Heart left ventricle (tissue), 16 donors: ENCODE measurements at regions of chr5 and their contacts with region 1.

Region 1: GRCh38 chr5:116507941-116508655 is 66.5 kb downstream of the SEMA6A start:
- DNase-seq: no peak
- ATAC-seq: no peak
- H3K4me3 ChIP-seq: no peak overlapping the region
- H3K27ac ChIP-seq: peak overlapping the region in 1 of 12 donors; percentile 45
- H3K4me1 ChIP-seq: peaks cover 0 to 21% (median 1%) of the 10 kb centered on the region in 12 donors
- H3K27me3 ChIP-seq: no peaks in the 10 kb centered on the region
- CTCF ChIP-seq: no peak
- POLR2A ChIP-seq: no peak

Region 2: GRCh38 chr5:116420540-116420939 is 87.6 kb before region 1 on chr5:
- intact Hi-C with region 1: no loop called
- DNase-seq: peak in 4 of 5 donors; percentile 32 to 47 (median 38)
- ATAC-seq: peak; percentile 47 to 95 (median 64)
- H3K4me3 ChIP-seq: no peak overlapping the region
- H3K27ac ChIP-seq: peak overlapping the region in 5 of 12 donors; percentile 22 to 54 (median 42)
- H3K4me1 ChIP-seq: peaks cover 0 to 19% (median 2%) of the 10 kb centered on the region in 12 donors
- H3K27me3 ChIP-seq: no peaks in the 10 kb centered on the region
- CTCF ChIP-seq: no peak
- POLR2A ChIP-seq: no peak

Region 3: GRCh38 chr5:116497631-116498030 is 10.5 kb before region 1 on chr5:
- intact Hi-C with region 1: loop called in 1 of 10 experiments (anchors 1 kb)
- DNase-seq: no peak
- ATAC-seq: no peak
- H3K4me3 ChIP-seq: no peak overlapping the region
- H3K27ac ChIP-seq: no peak overlapping the region
- H3K4me1 ChIP-seq: peaks cover 0 to 16% (median 2%) of the 10 kb centered on the region in 12 donors
- H3K27me3 ChIP-seq: no peaks in the 10 kb centered on the region
- CTCF ChIP-seq: no peak
- POLR2A ChIP-seq: no peak